Cardiac septum (tissue), 1 donor: ENCODE measurements at regions of chr4 and their contacts with region 1.

Region 1: DNA sequence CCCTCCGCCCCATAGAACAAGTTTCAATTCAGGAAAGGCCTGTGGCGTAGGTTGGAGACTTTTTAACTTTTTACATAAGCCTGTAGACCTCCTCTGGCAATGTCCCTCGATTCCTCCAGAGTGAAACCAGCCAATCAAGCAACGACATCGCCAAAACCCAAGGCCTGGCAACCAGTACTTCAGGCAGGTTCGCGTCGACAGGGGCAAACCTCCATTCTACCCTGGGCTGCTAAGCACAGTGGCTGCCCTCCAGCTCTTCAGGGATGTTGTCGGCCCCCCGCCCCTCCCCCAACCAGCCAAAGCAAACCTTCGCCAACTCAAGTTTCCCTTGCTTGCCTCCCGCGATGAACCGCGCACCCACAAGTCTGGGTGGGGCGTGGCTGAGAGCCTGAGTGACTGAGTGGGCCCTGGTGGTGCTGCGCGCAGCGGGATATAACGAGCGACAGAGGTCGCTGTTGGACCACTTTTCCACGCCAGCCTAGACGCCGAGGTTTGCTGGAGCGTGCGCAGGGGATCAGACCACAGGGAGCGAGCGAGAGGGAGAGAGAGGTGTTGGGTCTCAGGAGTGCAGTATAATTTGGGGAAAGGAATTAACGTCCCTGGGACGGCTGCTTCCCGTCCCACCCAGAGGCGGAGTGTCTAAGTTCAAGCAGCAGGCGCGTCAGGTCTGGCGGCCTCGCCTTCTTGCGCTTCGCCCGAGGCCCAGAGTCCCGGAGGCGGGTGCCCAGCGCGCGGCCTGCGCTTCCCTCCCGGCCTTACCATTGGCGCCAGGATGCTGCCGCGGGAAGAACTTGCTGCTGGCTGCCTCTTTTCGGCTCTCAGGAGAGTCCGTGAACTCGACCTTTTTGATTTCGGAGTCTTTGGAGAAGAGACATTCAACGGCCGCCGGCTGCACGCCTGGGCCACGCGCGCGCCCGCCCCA is 9.0 kb upstream of the PITX2 start:
- DNase-seq: no peak

Region 2: DNA sequence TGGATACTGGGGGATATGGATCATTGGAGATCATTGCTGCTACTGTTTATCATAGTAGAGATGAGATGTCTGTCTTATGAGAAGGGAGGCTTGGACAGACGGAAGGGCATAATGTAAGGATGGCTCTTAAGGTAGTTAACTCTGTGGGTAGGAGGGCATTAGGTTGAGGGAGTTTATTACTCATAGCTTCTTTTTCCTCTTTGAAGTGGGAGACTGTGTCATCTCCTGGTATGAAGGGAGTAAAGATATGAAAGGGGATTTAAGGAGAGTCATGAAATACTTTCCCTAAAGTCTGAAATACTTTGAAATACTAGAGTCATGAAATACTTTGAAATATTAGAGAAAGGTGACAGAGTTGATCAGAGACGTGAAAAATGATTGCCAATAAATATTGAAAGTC is 246.6 kb after region 1 on chr4:
- intact Hi-C with region 1: no loop called
- DNase-seq: no peak

Region 3: GRCh38 chr4:110959041-110959643 is 327.3 kb after region 1 on chr4:
- intact Hi-C with region 1: loop called (anchors 5 kb)
- DNase-seq: no peak

Region 4: DNA sequence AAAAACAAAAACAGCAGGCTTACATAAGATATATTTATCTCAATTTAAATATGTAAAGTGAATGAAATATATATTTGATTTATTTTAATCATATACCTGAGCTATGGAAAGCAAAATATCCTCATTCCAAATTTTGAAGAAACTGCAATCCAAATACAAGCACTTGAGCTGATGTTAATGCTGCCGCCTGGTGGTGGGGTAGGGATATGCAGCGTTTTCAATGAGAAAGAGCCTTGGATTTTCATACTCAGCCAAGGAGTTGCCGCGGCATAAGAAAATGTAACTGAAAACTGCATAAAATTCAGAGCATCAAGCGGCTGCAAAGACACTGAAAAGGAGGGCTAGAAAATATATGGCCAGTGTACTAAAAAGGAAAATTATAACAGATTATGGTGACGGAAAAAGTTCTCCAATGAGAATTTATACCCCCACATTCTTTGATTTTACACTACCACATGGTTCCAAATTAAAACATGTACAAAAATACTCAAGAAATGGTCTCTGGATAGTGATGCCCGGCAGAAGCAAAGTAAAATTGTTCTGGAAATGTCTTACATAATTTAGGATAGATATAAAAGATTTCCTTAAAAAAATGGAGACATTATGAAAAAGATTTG is 651.3 kb after region 1 on chr4:
- intact Hi-C with region 1: loop called (anchors 5 kb)
- DNase-seq: no peak

Region 5: GRCh38 chr4:111475001-111475400 is 843.2 kb after region 1 on chr4:
- intact Hi-C with region 1: loop called (anchors 5 kb)
- DNase-seq: no peak

Region 6: GRCh38 chr4:111631215-111631999 is 999.6 kb after region 1 on chr4:
- intact Hi-C with region 1: loop called (anchors 5 kb)
- DNase-seq: no peak